B cell (primary cell): ENCODE measurements at regions of chr1 and their contacts with region 1.

Region 1: GRCh38 chr1:206479183-206480125 is 9.2 kb downstream of the IKBKE start:
- DNase-seq: peak; percentile 80
- ATAC-seq: peak; percentile 79
- H3K4me3 ChIP-seq: no peak overlapping the region
- H3K4me3 Mint-ChIP-seq: no peak overlapping the region
- H3K27ac ChIP-seq: no peak overlapping the region
- H3K27ac Mint-ChIP-seq: peak overlapping the region; percentile 42
- H3K4me1 ChIP-seq: no peaks in the 10 kb centered on the region
- H3K4me1 Mint-ChIP-seq: peaks cover 4% of the 10 kb centered on the region
- H3K27me3 ChIP-seq: no peaks in the 10 kb centered on the region
- H3K27me3 Mint-ChIP-seq: no peaks in the 10 kb centered on the region
- CTCF ChIP-seq: peak; percentile 78

Region 2: DNA sequence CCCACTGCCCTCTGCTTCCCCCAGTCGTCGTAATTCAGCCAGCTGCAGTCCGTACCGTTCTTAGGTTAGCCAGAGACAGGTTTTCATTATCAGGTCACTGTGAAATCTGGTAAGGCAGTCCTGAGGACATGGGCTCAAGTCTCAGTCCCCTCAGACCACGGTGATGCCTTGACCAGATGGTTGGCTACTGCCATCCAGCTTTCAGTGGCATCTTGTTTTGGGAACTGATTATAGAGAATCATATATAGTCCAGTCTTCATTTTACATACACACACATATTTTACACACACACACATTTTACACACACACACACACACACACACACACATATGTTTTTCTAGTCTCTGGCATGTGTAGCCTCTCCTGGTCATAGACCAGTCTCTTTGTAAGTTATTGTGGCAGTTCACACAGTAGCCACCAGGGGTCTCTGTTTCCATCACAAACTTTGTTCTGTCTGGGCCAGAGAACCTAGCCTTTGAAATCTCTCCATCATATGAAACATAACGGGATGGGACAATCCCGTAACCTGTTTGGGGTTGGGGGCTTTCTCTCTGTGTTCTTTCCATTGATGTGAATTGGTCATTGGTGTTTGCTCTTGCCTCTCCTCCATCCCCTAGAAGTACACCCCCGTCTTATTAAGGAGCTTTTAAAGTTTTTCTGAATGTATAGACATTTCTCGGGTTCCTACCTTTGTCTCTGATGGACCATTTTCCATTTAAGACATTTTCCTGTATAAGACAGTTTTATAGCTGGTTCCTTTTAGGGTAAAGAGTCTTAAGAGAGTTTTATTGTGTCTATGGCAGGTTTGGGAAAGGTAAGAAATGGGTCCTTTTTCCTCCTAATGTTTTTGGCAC is 17.6 kb before region 1 on chr1:
- CTCF ChIA-PET with region 1: interaction called, 79 read pairs
- POLR2A ChIA-PET with region 1: interaction called, 4 read pairs
- intact Hi-C with region 1: loop called (anchors 1 kb)
- DNase-seq: peak; percentile 78
- ATAC-seq: peak; percentile 94
- H3K4me3 ChIP-seq: no peak overlapping the region
- H3K4me3 Mint-ChIP-seq: no peak overlapping the region
- H3K27ac ChIP-seq: no peak overlapping the region
- H3K27ac Mint-ChIP-seq: no peak overlapping the region
- H3K4me1 ChIP-seq: peaks cover 12% of the 10 kb centered on the region in 2 donors
- H3K4me1 Mint-ChIP-seq: peaks cover 10% of the 10 kb centered on the region
- H3K27me3 ChIP-seq: no peaks in the 10 kb centered on the region
- H3K27me3 Mint-ChIP-seq: no peaks in the 10 kb centered on the region
- CTCF ChIP-seq: peak; percentile 84

Region 3: DNA sequence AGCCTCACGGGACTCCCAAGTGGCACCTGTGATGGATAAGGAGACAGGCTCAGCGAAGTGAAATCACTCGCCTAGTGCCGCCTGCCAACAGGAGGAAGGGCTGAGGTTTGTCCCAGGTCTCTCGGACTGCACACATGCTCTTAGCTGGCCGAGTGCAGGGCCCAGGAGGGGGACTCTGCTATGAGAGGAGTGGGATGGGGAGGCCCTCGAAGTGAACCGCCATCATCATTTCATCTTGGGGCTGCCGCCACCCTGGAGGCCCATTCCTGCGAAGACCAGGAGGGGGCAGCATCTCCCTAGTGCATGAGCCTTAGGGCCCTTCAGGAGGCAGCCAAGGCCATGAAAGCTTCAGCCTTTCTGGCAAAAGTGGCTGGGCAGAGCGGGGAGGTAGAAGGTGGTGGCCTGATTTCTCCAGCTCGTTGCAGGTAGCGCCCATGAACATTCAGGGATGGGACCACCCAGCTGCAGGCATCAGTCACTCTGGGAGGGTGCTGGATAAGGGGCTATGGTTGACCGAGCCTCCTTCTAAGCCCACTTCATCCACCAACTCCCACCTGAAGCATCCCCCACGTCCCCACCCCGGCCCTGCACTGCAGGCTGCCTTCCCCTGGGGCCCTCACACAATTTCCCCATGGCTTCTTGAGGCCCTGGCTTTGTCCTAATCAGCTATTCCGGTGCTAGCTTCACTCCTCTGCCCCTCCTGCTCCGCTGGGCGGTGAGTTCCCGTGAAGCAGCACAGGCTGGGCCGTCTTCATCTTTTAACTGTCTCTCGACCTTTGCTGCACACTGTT is 10.7 kb after region 1 on chr1:
- CTCF ChIA-PET with region 1: interaction called, 26 read pairs
- POLR2A ChIA-PET with region 1: no interaction called
- intact Hi-C with region 1: no loop called
- DNase-seq: peak; percentile 73
- ATAC-seq: peak; percentile 80
- H3K4me3 ChIP-seq: no peak overlapping the region
- H3K4me3 Mint-ChIP-seq: no peak overlapping the region
- H3K27ac ChIP-seq: no peak overlapping the region
- H3K27ac Mint-ChIP-seq: no peak overlapping the region
- H3K4me1 ChIP-seq: peaks cover 4 to 5% of the 10 kb centered on the region in 2 donors
- H3K4me1 Mint-ChIP-seq: peaks cover 7% of the 10 kb centered on the region
- H3K27me3 ChIP-seq: no peaks in the 10 kb centered on the region
- H3K27me3 Mint-ChIP-seq: no peaks in the 10 kb centered on the region
- CTCF ChIP-seq: peak; percentile 83